MCF 10A (cell line): ENCODE measurements at regions of chr2 and their contacts with region 1.

Region 1: DNA sequence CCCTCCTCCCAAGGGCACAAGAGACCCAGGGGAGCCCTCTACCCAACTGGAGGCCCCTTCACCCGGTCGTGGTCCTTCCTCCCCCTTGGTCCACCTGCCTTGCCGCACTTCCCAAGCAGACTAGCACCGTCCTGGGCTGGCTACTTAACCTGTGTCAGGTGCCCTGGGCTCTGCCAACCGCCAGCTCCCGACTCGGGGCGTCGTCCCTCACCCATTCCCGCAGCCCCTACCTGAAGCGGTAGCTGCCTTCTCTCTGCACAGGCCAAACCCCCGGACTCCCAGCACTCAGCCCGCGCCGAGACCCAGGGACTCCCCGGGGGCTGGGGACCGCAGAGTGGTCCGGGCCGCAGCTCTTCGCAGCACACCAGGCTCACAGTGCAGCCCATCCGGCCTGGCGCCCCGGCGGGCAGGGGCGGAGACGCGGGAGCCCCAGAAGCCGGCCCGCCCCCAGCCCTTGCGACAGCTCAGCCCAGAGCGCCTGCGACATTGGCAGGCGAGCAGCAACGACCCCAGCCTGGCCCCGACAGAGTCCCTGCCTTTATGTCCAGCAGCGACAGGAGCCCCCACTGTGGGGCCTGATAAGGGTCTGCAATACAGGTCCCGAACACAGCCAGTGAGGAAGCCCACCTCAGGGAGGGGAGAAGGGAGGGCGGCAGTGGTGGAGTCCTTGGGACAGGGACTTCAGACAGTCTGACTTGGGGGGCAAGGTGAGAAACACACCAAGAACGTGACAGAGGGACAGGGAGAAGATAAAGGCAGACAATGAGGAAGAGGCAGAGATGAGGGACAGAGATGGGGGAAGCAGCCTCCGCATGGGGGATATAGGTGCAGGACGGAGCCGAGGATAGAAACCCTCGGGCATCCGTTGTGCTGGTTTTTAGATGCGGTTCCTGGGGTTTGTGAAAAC is 31.0 kb upstream of the TNS1 start:
- DNase-seq: no peak
- H3K4me3 Mint-ChIP-seq: no peak overlapping the region
- H3K27ac Mint-ChIP-seq: no peak overlapping the region
- H3K4me1 Mint-ChIP-seq: no peaks in the 10 kb centered on the region
- H3K27me3 Mint-ChIP-seq: peaks cover 28% of the 10 kb centered on the region
- CTCF ChIP-seq: no peak

Region 2: DNA sequence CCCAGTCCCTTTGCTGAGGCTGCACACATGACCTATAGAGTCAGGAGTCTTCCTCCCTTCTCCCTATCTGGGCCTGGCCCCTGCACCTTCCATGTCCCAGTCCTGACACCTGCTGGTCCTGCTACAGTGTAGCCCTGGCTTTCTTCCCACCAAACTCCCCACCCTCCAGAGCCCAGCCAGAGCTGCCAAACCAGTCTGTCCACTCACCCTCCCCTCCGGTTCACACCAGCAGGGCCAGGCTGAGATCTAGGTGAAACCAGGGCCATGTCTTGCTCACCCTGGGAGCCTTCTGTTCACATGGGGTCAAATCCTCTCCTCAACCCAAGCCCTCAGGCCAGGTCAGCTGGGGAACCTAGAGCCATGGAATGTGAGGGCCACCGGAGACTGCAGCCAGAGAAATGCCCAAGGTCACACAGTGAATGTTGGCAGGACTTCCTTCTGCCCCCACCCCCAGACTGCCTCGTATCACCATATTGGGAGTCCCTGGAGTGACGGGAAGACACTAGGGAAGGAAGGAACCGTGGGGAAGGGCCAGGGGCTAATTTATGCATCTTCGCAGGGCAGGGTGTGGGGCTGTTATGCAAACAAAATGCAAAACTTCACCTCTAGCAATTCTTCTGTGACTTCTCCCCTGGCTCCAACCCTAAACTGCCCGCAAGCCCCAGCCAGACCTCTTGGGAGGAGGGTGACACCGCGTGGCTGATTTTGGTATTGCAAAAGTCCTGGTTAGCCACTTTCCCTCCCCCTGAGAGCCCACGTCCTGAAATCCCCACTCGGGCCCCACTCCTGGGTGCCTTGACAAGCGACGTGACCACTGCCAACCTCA is 45.6 kb before region 1 on chr2:
- CTCF ChIA-PET with region 1: interaction called, 5 read pairs
- POLR2A ChIA-PET with region 1: no interaction called
- intact Hi-C with region 1: loop called (anchors 2 kb)
- DNase-seq: peak; percentile 75
- H3K4me3 Mint-ChIP-seq: no peak overlapping the region
- H3K27ac Mint-ChIP-seq: no peak overlapping the region
- H3K4me1 Mint-ChIP-seq: peaks cover 7% of the 10 kb centered on the region
- H3K27me3 Mint-ChIP-seq: no peaks in the 10 kb centered on the region
- CTCF ChIP-seq: peak; percentile 93

Region 3: DNA sequence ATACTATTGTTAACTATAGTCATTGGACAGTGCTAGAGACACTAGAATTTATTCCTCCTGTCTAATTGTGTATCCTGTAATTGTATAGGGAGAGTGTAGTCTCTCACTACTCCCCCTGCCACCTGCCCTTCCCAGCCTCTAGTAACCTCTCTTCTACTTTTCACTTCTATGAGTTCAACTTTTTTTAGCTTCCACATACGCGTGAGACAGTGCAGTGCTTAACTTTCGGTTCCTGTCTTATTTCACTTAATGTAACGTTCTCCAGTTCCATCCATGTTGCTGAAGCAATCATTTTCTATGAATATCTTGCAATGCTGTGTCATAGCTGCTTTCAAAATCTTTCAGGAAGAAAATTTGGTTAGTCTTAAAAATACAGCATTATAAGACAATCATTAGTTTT is 12.4 kb after region 1 on chr2:
- CTCF ChIA-PET with region 1: interaction called, 19 read pairs
- POLR2A ChIA-PET with region 1: no interaction called
- intact Hi-C with region 1: no loop called
- DNase-seq: no peak
- H3K4me3 Mint-ChIP-seq: no peak overlapping the region
- H3K27ac Mint-ChIP-seq: no peak overlapping the region
- H3K4me1 Mint-ChIP-seq: no peaks in the 10 kb centered on the region
- H3K27me3 Mint-ChIP-seq: peaks cover 59% of the 10 kb centered on the region
- CTCF ChIP-seq: no peak